Astrocyte of the cerebellum (primary cell): ENCODE measurements at regions of chr1 and their contacts with region 1.

Region 1: GRCh38 chr1:21368515-21369289 is 71.2 kb upstream of the NBPF3 start:
- DNase-seq: peak; percentile 63
- H3K4me3 ChIP-seq: no peak overlapping the region
- CTCF ChIP-seq: peak; percentile 100

Region 2: DNA sequence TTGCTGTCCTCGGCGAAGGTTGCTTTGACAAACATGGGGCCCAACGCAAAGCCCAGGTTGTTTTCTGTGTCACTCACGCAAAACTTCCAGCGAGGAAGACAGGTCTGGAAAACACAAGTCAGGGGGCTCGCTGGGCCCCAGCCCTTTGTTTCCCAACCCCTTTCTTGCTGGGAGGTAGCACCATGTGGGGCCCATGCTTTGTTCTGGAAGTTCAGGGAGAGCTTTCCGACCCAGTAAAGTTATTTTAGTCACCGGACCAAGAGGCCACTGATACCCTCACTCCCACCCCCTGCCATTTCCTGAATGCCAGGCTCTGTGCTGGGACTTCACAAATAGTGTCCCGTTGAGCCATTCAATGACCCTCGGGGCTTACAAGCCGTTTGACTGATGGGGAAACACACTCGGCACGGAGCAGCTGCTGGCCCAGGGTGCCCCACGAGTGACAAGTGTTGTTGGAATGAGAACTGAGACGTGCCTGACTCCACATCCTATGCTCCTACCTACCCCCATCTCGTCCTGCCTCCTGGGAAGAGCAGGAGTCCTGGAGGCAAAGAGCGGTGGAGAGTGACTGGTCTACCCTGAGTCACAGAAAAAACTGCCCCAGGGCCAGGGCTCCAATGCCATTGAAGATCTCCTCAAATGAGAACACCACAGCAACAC is 130.4 kb before region 1 on chr1:
- in situ Hi-C with region 1: loop called (anchors 5 kb)
- DNase-seq: no peak
- H3K4me3 ChIP-seq: no peak overlapping the region
- CTCF ChIP-seq: no peak

Region 3: DNA sequence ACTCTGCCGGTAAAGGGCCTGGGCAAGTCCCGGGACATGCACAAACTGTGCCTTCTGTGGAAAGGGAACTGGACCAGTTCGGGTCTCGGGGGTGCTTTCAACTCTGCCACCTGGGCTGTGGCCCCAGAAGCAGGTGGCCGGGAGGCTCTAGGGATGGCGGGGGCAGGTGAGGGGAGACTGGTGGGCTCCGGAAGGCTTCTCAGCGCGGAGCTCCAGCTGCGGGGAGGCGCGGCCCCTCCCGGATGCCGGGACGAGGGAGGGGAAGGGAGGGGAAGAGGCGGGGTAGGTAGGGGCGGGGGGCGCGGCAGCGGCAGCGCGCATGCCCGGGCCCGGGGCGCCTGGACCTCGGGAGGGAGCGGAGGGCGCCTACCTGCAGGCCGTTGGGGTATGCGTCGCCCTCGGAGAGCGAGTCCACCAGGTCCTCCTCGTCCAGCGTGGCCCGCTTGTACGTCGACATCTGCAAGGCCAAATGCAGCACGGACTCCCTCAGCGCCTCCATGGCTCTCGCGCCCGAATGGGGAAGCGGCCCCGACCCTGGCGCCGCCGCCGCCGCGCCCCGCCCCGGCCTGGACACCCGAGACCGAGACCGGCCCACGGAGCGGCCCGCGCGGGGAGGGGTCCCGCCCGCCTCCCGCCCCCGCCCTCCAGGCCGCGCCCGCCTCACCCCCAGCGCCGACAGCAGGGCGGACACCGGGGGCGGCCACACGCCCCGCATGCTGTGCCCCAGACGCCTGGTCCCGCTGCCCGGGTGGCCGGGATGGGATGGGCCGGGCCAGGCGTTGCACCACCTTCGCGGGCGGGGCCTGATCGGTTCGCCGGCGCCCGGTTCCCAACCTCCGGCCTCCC is 78.8 kb before region 1 on chr1 and contains the start of gene ECE1:
- in situ Hi-C with region 1: no loop called
- DNase-seq: no peak
- H3K4me3 ChIP-seq: peak within 1 kb of the TSS; percentile 55
- CTCF ChIP-seq: no peak

Region 4: GRCh38 chr1:21318714-21319159 is 50.0 kb before region 1 on chr1:
- in situ Hi-C with region 1: no loop called
- DNase-seq: no peak
- H3K4me3 ChIP-seq: no peak overlapping the region
- CTCF ChIP-seq: no peak

Region 5: GRCh38 chr1:21524686-21525339 is 156.1 kb after region 1 on chr1:
- in situ Hi-C with region 1: loop called (anchors 5 kb)
- DNase-seq: no peak
- H3K4me3 ChIP-seq: no peak overlapping the region
- CTCF ChIP-seq: no peak

Region 6: DNA sequence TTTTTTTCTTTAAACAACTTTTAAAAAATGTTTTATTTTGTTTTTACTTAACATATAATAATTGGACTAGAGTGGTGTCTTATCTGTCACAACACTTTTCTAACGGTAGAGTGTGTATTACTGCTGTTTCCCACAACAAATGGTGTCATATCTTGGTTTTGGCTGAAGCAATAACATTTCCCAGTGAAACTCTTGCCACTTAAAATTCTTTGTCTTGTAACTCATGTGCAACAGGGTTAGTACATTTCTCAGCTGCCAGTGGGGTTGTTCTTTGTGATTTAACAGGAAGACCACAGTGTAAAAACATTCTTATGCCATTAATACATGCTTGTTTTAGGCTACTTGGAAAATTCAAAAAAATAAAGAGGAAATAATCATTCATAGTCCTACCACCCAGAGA is 184.0 kb after region 1 on chr1:
- in situ Hi-C with region 1: loop called (anchors 5 kb)
- DNase-seq: peak; percentile 92
- H3K4me3 ChIP-seq: no peak overlapping the region
- CTCF ChIP-seq: no peak

Region 7: GRCh38 chr1:21663258-21663950 is 294.7 kb after region 1 on chr1:
- in situ Hi-C with region 1: loop called (anchors 5 kb)
- DNase-seq: no peak
- H3K4me3 ChIP-seq: no peak overlapping the region
- CTCF ChIP-seq: no peak

Region 8: GRCh38 chr1:21734526-21734925 is 365.8 kb after region 1 on chr1:
- in situ Hi-C with region 1: no loop called
- DNase-seq: no peak
- H3K4me3 ChIP-seq: no peak overlapping the region
- CTCF ChIP-seq: no peak